Pancreas (tissue), 10 donors: ENCODE measurements at regions of chr2 and their contacts with region 1.

Region 1: GRCh38 chr2:209191139-209191538 is 232.7 kb upstream of the MAP2 start:
- DNase-seq: no peak
- ATAC-seq: no peak
- H3K4me3 ChIP-seq: no peak overlapping the region
- H3K27ac ChIP-seq: no peak overlapping the region
- H3K4me1 ChIP-seq: no peaks in the 10 kb centered on the region
- H3K27me3 ChIP-seq: peaks cover 0 to 4% (median 0%) of the 10 kb centered on the region in 4 donors
- CTCF ChIP-seq: no peak

Region 2: DNA sequence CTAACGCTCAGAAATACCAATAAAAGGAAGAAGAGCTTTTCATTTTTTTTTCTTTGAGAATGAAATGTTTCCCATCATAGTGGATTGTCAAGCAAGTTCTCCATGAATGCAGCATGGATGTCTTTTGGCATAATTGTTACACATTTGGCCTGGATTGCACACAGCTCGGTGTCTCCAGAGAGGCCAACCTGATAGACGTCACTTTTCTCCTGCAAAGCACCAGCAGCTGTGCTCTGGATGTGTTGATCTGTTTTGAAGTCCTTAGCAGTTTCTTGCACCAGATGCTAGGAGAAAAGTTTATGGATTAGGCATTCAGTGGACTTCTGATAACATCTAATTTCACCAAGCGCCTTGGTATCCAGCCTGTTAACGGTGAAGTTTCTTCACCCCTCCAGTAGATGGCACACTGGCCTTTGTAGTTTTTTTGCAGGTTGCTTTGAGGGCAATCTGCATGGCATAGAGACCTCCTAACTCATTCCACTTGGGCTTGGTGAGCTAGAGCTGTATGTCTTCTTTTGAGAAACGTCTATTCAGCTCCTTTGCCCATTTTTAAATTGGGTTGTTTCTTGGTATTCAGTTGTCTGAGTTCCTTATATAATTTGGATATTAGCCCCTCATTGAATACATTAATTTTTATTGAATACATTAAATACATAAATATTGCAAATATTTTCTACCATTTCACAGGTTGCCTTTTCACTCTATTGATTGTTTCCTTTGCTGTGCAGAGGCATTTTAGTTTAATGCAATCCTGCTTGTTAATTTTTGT is 724.8 kb before region 1 on chr2:
- intact Hi-C with region 1: loop called in 1 of 3 experiments (anchors 10 kb)
- DNase-seq: peak in 2 of 6 donors; percentile 31 to 46
- ATAC-seq: peak; percentile 67 to 95 (median 91)
- H3K4me3 ChIP-seq: no peak overlapping the region
- H3K27ac ChIP-seq: no peak overlapping the region
- H3K4me1 ChIP-seq: peaks cover 0 to 15% (median 10%) of the 10 kb centered on the region in 3 donors
- H3K27me3 ChIP-seq: no peaks in the 10 kb centered on the region
- CTCF ChIP-seq: peak in 3 of 4 donors; percentile 24 to 45 (median 44)

Region 3: GRCh38 chr2:209790066-209790728 is 599.1 kb after region 1 on chr2:
- intact Hi-C with region 1: no loop called
- DNase-seq: no peak
- ATAC-seq: no peak
- H3K4me3 ChIP-seq: no peak overlapping the region
- H3K27ac ChIP-seq: no peak overlapping the region
- H3K4me1 ChIP-seq: no peaks in the 10 kb centered on the region
- H3K27me3 ChIP-seq: no peaks in the 10 kb centered on the region
- CTCF ChIP-seq: no peak